Ovary (tissue), 10 donors: ENCODE measurements at regions of chr12 and their contacts with region 1.

Region 1: GRCh38 chr12:98644711-98645402 is at the starts of genes APAF1 and IKBIP:
- DNase-seq: peak; percentile 95 to 99 (median 96)
- H3K4me3 ChIP-seq: peak within 1 kb of the TSS; percentile 82
- H3K27ac ChIP-seq: peak within 1 kb of the TSS; percentile 71 to 79
- H3K4me1 ChIP-seq: peaks cover 4% of the 10 kb centered on the region
- H3K27me3 ChIP-seq: no peaks in the 10 kb centered on the region
- CTCF ChIP-seq: peak in 1 of 3 donors; percentile 4
- EP300 ChIP-seq: no peak
- POLR2A ChIP-seq: peak; percentile 58
- total RNA-seq, gene APAF1: 9.4 to 17.1 (median 11.9) TPM
- total RNA-seq, gene IKBIP: 6.8 to 12.4 (median 9.5) TPM

Region 2: GRCh38 chr12:98593351-98594049 is 51.4 kb before region 1 on chr12 and contains the start of gene SLC25A3:
- intact Hi-C with region 1: loop called in 2 of 4 experiments (anchors 5 to 10 kb)
- DNase-seq: peak; percentile 96 to 98 (median 97)
- H3K4me3 ChIP-seq: peak within 1 kb of the TSS; percentile 91
- H3K27ac ChIP-seq: peak within 1 kb of the TSS; percentile 85 to 92
- H3K4me1 ChIP-seq: peaks cover 7% of the 10 kb centered on the region
- H3K27me3 ChIP-seq: no peaks in the 10 kb centered on the region
- CTCF ChIP-seq: peak in 1 of 3 donors; percentile 12
- EP300 ChIP-seq: no peak
- POLR2A ChIP-seq: peak; percentile 92
- total RNA-seq, gene SLC25A3: 347 to 462 (median 427) TPM